Activated naive CD4-positive, alpha-beta T cell treated with anti-CD3 and anti-CD28 coated beads, Interleukin-2, amount 10 ng/mL, durations not matched to agents 7 days and 5 days (primary cell): ENCODE measurements at regions of chr13 and their contacts with region 1.

Region 1: DNA sequence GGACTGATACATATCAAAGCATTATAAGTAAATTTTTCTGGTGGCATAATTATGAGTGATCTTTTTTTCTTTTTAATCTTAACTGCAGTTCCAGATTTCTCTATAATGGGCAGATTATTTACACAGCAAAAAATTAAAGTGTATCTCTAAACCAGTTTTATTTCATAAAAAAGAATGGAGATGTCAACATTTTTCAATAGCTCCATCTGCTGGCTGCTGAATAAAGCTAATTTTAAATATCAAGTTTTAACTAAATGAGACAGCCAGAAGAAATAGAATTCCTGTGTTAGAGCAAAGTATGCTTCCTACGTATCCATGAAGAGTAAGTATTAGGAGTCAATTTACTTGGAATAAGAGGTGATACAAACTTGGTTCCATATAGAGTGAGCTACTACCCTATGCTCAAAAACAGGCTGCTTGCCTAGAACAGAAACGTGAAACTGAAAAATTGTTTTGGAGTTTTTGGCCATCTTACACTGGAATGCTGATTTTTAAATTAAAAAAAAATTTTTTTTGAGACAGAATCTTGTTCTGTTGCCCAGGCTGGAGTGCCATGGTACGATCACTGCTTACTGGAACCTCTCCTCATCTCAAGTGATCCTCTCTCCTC is 5.0 kb upstream of the PDS5B start:
- DNase-seq: no peak
- H3K4me3 Mint-ChIP-seq: no peak overlapping the region
- H3K27ac Mint-ChIP-seq: no peak overlapping the region
- H3K4me1 Mint-ChIP-seq: peaks cover 10% of the 10 kb centered on the region
- H3K27me3 Mint-ChIP-seq: peaks cover 11% of the 10 kb centered on the region

Region 2: DNA sequence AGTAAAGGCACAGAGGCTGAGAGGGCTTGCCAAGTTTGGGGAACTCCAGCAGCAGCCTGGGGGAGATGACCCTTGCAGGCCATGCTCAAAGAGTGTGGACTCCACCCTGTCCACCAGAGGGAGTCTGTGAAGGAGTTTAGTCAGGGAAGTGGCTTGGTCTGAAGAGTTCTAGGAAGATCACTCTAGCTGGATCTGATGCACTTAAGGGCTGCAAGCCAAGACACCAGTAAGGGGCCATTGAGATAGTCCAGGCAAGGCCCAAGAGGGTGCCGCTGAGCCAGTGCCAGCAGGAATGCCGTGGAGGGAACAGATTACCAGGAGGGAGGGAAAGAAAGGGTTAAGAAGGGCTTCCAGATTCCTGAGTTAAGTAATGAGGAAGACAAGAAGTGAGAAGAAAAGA is 334.8 kb before region 1 on chr13:
- CTCF ChIA-PET with region 1: interaction called, 13 read pairs
- DNase-seq: peak; percentile 57
- H3K4me3 Mint-ChIP-seq: no peak overlapping the region
- H3K27ac Mint-ChIP-seq: no peak overlapping the region
- H3K4me1 Mint-ChIP-seq: no peaks in the 10 kb centered on the region
- H3K27me3 Mint-ChIP-seq: no peaks in the 10 kb centered on the region

Region 3: GRCh38 chr13:32381539-32381938 is 199.7 kb before region 1 on chr13:
- CTCF ChIA-PET with region 1: interaction called, 18 read pairs
- DNase-seq: peak; percentile 29
- H3K4me3 Mint-ChIP-seq: no peak overlapping the region
- H3K27ac Mint-ChIP-seq: no peak overlapping the region
- H3K4me1 Mint-ChIP-seq: no peaks in the 10 kb centered on the region
- H3K27me3 Mint-ChIP-seq: no peaks in the 10 kb centered on the region

Region 4: DNA sequence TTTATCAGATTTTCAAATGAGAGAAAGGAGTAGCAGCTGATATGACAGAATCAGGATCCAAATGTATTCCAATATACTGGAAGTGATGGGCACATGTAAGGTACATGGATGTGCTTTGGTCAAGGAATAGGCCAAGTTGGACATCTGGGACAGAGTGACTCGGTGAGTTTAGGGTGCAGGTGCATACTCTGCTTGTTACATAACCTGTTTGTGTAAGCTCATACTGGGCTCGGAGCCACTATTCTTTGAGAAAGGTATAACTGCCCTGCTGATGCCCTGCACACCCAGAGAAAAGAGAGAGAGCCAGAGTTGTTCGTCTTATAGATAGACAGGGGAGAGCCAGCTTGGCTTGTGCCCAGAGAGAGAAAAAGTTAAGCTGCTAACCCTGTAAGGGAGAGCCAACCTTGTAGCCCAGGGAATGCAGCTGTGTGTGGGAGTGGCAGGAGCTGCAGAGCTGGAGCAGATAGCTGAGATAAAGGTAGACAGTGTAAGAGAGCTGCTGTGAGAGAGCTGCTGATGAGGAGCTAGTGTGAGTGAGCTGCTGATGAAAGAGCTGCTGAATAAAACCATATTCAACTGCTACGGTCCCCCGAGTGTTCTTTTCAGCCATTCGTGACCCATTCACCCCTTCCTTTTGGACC is 112.7 kb before region 1 on chr13:
- CTCF ChIA-PET with region 1: interaction called, 26 read pairs
- DNase-seq: no peak
- H3K4me3 Mint-ChIP-seq: no peak overlapping the region
- H3K27ac Mint-ChIP-seq: no peak overlapping the region
- H3K4me1 Mint-ChIP-seq: peaks cover 15% of the 10 kb centered on the region
- H3K27me3 Mint-ChIP-seq: peaks cover 3% of the 10 kb centered on the region

Region 5: DNA sequence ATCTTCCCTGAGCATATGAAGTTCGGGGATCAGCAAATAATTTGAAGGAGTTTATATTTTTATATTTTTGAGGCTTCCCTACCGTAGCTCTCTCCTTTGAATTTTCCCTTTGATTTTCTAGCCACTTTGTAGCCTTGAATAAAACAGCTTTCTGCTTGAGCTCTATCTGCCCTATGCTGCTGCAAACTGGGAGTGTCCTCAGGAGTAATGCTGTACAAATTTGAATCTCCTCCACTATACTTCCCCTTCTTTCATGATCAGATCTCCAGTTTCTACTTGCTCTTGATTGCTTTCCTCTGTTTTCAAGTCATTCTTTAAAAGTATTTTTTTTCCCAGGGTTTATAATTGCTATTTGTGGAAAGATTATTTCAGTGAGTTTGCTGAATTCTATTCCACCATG is 19.6 kb after region 1 on chr13:
- CTCF ChIA-PET with region 1: no interaction called
- DNase-seq: no peak
- H3K4me3 Mint-ChIP-seq: no peak overlapping the region
- H3K27ac Mint-ChIP-seq: no peak overlapping the region
- H3K4me1 Mint-ChIP-seq: peaks cover 20% of the 10 kb centered on the region
- H3K27me3 Mint-ChIP-seq: no peaks in the 10 kb centered on the region